ENCODE measurements at regions of chrX and their contacts with region 1.

Region 1: GRCh38 chrX:123833387-123833786 is 26.5 kb upstream of the XIAP start:
- DNase-seq: peak; percentile 1
- H3K4me3 ChIP-seq: no peak overlapping the region
- H3K27ac ChIP-seq: no peak overlapping the region
- H3K27me3 ChIP-seq: no peaks in the 10 kb centered on the region
- CTCF ChIP-seq: peak; percentile 73

Region 2: DNA sequence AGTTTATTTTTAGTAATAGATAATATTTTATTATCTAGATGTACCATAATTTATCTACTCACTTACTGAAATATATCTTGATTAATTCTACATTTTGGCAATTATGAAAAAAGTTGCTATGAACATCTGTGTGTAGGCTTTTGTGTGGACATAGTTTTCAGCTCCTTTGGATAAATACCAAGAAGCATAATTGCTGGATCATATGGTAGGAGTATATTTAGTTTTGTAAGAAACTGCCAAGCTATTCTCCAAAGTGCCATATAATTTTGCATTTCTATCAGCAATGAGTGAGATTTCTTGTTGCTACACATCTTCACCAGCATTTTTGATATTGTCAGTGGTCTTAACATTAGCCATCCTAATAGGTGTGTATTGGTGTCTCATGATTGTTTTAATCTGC is 1531.9 kb before region 1 on chrX:
- CTCF ChIA-PET with region 1: no interaction called
- POLR2A ChIA-PET with region 1: no interaction called
- DNase-seq: no peak
- H3K4me3 ChIP-seq: no peak overlapping the region
- H3K27ac ChIP-seq: no peak overlapping the region
- H3K27me3 ChIP-seq: no peaks in the 10 kb centered on the region
- CTCF ChIP-seq: no peak

Region 3: GRCh38 chrX:123818243-123818642 is 15.1 kb before region 1 on chrX:
- CTCF ChIA-PET with region 1: interaction called, 16 read pairs
- POLR2A ChIA-PET with region 1: no interaction called
- DNase-seq: no peak
- H3K4me3 ChIP-seq: no peak overlapping the region
- H3K27ac ChIP-seq: no peak overlapping the region
- H3K27me3 ChIP-seq: no peaks in the 10 kb centered on the region
- CTCF ChIP-seq: no peak

Region 4: DNA sequence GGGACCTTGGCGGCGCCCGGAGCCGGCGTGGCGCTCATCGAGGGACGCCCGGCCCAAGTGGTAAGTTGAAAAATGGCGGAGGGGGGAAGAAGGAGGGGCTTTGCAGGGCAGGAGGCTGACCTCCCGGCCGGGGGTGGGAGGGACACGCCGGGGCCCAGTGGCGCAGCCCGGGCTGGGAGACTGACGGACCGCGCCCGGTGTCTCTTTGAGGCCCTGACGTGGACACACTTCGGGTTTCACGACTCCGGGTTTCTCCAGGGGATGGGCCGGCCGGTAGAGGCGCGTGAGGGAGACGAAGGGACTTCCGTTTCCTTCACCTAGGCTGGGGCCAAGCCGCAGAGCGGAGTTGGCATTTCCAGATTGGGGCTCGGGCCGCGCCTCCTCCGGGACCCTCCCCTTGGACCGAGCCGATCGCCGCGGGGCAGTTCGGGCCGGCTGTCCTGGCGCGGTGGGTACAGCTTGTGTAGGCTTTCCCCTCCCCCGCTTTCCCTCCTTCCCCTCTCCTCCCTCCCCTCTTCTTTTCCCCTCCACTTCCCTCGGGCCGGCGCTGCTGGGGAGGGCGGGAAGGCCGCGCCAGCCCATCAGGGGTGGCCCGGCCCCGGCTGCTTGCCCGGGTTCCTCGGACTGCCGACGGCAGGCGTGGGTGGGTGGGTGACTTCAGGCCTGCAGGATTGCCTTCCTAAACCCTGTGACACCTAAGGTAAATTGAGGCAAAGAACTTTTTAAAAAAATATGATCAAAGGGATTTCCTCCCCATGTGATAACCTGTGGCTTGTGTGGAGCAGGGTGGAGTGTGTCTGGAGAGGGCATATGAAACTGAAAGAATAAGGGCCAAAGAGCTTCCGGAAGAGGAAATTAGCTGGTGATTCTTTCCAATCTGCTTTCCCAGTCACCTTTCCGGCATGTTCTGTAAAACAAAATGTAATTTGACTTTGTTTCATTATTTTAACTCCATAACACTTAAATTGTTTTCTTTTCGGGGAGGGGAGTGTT is 26.8 kb after region 1 on chrX and contains the start of gene XIAP:
- CTCF ChIA-PET with region 1: interaction called, 11 read pairs
- POLR2A ChIA-PET with region 1: interaction called, 5 read pairs
- DNase-seq: peak; percentile 61
- H3K4me3 ChIP-seq: peak within 1 kb of the TSS; percentile 66
- H3K27ac ChIP-seq: peak within 1 kb of the TSS; percentile 97
- H3K27me3 ChIP-seq: no peaks in the 10 kb centered on the region
- CTCF ChIP-seq: no peak
- polyA plus RNA-seq, gene XIAP: 15.8 and 18.6 TPM in 2 replicates

Region 5: DNA sequence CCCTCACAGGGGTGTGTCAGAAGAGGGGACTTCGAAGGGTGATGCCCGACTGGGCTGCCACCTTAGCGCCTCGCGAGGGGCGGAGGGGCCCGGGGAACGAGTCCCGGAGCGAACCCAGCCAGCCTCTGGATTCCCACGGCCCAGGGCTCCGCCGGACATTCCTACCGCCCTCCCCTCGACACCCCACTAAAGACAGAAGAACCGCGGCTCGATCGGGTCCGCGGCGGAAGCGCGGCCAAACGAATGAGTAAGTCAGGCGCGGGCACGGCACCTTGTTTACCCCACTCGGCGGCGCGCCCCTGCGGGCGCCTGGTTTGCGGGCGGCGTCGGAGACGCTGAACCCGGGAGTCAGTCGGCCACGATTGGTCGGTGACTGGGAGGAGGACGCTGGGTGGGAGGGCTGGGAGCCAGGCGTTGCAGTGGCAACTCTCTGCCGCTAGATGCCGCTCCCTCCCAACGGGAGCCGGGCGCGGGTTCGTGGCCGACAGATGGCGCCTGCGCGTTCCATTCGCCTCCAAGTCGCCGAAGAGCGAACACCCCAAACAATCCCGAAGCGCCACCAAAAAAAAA is 126.7 kb after region 1 on chrX:
- CTCF ChIA-PET with region 1: interaction called, 15 read pairs
- POLR2A ChIA-PET with region 1: interaction called, 3 read pairs
- DNase-seq: peak; percentile 74
- H3K4me3 ChIP-seq: peak overlapping the region; percentile 65
- H3K27ac ChIP-seq: peak overlapping the region; percentile 81
- H3K27me3 ChIP-seq: no peaks in the 10 kb centered on the region
- CTCF ChIP-seq: peak; percentile 74

Region 6: DNA sequence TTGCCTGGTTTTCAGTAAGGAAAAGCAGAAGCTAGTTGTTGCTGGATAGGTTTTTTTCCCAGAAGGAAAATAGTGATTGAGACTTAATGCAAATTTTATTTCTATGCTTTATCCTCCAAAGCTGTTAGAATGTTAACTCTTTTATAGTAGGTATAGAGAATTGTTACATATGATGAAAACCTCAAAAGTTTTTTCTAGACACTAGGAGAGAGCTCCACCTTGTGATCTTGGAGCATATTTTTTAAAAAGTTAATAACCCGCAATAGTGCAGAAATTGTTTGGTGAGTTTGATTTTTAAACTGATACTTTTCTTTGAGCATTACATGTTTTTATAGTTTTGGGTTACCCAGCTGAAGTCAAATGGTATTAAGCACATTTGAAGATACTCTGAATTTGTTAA is 184.6 kb after region 1 on chrX:
- CTCF ChIA-PET with region 1: interaction called, 19 read pairs
- POLR2A ChIA-PET with region 1: no interaction called
- DNase-seq: no peak
- H3K4me3 ChIP-seq: no peak overlapping the region
- H3K27ac ChIP-seq: no peak overlapping the region
- H3K27me3 ChIP-seq: no peaks in the 10 kb centered on the region
- CTCF ChIP-seq: peak; percentile 17; the same call in 1 of the 2 replicates